Activated CD8-positive, alpha-beta memory T cell treated with anti-CD3 and anti-CD28 coated beads, Interleukin-2, amount 10 ng/mL, durations not matched to agents 7 days and 5 days (primary cell): ENCODE measurements at regions of chrX and their contacts with region 1.

Region 1: GRCh38 chrX:123960042-123960611 is 1.4 kb upstream of the STAG2 start:
- DNase-seq: peak; percentile 93
- ATAC-seq: peak; percentile 74
- H3K4me3 Mint-ChIP-seq: peak overlapping the region; percentile 88
- H3K27ac Mint-ChIP-seq: peak overlapping the region; percentile 98
- H3K4me1 Mint-ChIP-seq: peaks cover 14% of the 10 kb centered on the region
- H3K27me3 Mint-ChIP-seq: no peaks in the 10 kb centered on the region

Region 2: DNA sequence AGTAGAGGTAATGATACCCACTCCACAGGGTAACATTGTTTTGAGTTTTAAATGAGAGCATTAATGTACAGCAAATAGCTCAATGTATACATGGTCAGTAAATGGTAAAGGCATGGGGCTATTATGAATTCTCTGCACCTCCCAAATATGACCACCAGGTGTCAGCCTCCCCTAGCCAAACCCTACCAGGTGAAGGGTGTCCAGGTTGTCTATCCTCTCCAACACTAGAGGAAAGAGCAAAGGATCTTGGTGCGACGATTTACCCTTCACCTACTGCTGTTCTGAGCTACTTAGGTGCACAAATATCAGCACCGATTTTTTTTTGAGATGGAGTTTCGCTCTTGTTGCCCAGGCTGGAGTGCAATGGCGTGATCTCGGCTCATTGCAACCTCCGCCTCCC is 126.7 kb before region 1 on chrX:
- CTCF ChIA-PET with region 1: interaction called, 28 read pairs
- DNase-seq: peak; percentile 69
- ATAC-seq: peak; percentile 94
- H3K4me3 Mint-ChIP-seq: no peak overlapping the region
- H3K27ac Mint-ChIP-seq: no peak overlapping the region
- H3K4me1 Mint-ChIP-seq: peaks cover 4% of the 10 kb centered on the region
- H3K27me3 Mint-ChIP-seq: peaks cover 9% of the 10 kb centered on the region

Region 3: GRCh38 chrX:123943488-123943887 is 16.6 kb before region 1 on chrX:
- CTCF ChIA-PET with region 1: no interaction called
- DNase-seq: no peak
- ATAC-seq: no peak
- H3K4me3 Mint-ChIP-seq: no peak overlapping the region
- H3K27ac Mint-ChIP-seq: no peak overlapping the region
- H3K4me1 Mint-ChIP-seq: no peaks in the 10 kb centered on the region
- H3K27me3 Mint-ChIP-seq: no peaks in the 10 kb centered on the region

Region 4: DNA sequence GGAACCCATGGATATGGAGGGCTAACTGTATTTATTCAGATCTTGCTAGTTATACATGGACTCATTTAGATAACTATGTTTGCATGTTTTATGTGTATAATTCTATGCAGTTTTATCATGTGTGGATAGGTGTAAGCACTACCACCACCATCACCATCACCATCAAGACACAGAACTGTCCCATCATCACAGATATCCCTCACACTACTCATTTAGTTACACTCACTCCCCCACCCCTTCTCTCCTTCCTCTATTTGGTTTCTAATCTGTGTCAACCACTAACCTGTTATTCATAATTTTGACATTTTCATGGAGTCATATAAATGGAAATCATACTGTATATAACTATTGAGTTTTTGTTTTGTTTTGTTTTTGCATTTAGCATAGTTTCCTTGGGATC is 45.1 kb after region 1 on chrX:
- CTCF ChIA-PET with region 1: no interaction called
- DNase-seq: no peak
- ATAC-seq: peak; percentile 42
- H3K4me3 Mint-ChIP-seq: no peak overlapping the region
- H3K27ac Mint-ChIP-seq: no peak overlapping the region
- H3K4me1 Mint-ChIP-seq: peaks cover 34% of the 10 kb centered on the region
- H3K27me3 Mint-ChIP-seq: no peaks in the 10 kb centered on the region